ENCODE measurements at regions of chr9 and their contacts with region 1.

Region 1: GRCh38 chr9:122125158-122125508 is 32.0 kb upstream of the TTLL11 start:
- DNase-seq: peak; percentile 90
- H3K4me3 ChIP-seq: no peak overlapping the region
- H3K27ac ChIP-seq: no peak overlapping the region
- H3K4me1 ChIP-seq: peaks cover 12% of the 10 kb centered on the region
- H3K27me3 ChIP-seq: no peaks in the 10 kb centered on the region

Region 2: DNA sequence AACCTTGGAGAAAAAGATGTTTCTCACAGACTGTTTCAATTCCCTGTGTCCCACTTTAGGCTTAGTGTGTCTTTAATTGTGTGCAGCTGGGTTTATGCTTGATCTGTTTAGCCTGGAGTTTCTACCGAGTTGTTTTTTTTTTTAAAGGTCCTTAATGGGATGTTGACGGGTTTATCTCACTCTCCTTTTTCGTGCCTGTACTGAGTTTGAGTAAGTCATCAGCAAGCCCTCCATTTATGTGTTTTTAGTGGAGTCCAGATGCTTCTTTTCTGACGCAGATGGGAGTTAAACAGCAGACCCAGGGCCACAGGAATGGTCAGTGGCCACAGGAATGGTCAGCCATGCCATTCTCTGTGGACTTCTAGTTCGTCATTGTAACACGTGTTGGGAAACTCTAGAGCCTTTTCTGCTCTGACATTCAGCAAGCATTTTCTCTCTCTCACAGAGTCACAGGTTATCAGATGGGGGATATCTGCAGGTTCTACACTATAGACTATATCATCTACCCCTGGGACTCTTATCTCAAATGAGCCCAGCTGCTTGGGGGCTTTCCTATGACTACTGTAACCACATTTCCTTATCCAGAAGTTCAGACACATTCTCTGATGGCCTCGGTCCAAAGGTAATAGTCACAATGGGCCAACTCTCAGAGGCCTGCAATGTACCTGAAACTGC is 222.5 kb before region 1 on chr9:
- in situ Hi-C with region 1: no loop called
- DNase-seq: peak; percentile 98
- H3K4me3 ChIP-seq: peak overlapping the region; percentile 25
- H3K27ac ChIP-seq: peak overlapping the region; percentile 72
- H3K4me1 ChIP-seq: peaks cover 38% of the 10 kb centered on the region
- H3K27me3 ChIP-seq: no peaks in the 10 kb centered on the region

Region 3: GRCh38 chr9:122239722-122240121 is 114.6 kb after region 1 on chr9:
- in situ Hi-C with region 1: no loop called
- DNase-seq: no peak
- H3K4me3 ChIP-seq: no peak overlapping the region
- H3K27ac ChIP-seq: no peak overlapping the region
- H3K4me1 ChIP-seq: no peaks in the 10 kb centered on the region
- H3K27me3 ChIP-seq: no peaks in the 10 kb centered on the region

Region 4: GRCh38 chr9:122453677-122454135 is 328.6 kb after region 1 on chr9:
- in situ Hi-C with region 1: loop called (anchors 5 kb)
- DNase-seq: peak; percentile 63
- H3K4me3 ChIP-seq: no peak overlapping the region
- H3K27ac ChIP-seq: no peak overlapping the region
- H3K4me1 ChIP-seq: no peaks in the 10 kb centered on the region
- H3K27me3 ChIP-seq: no peaks in the 10 kb centered on the region

Region 5: GRCh38 chr9:122827761-122828093 is 702.6 kb after region 1 on chr9:
- in situ Hi-C with region 1: loop called (anchors 10 kb)
- DNase-seq: peak; percentile 74
- H3K4me3 ChIP-seq: peak overlapping the region; percentile 100
- H3K27ac ChIP-seq: peak overlapping the region; percentile 94
- H3K4me1 ChIP-seq: peaks cover 10% of the 10 kb centered on the region
- H3K27me3 ChIP-seq: no peaks in the 10 kb centered on the region